ENCODE measurements at regions of chr2 and their contacts with region 1.

Region 1: GRCh38 chr2:218269899-218270720 is at the starts of genes AAMP and PNKD:
- DNase-seq: peak; percentile 100
- ATAC-seq: peak; percentile 88
- H3K4me3 Mint-ChIP-seq: peak within 1 kb of the TSS; percentile 84
- H3K27ac Mint-ChIP-seq: peak within 1 kb of the TSS; percentile 97
- H3K4me1 Mint-ChIP-seq: peaks cover 19% of the 10 kb centered on the region
- H3K27me3 Mint-ChIP-seq: no peaks in the 10 kb centered on the region
- CTCF ChIP-seq: no peak
- total RNA-seq, gene AAMP: 113 to 125 TPM (median 115 TPM) in 3 replicates
- total RNA-seq, gene PNKD: 45.0 to 49.8 TPM (median 45.8 TPM) in 3 replicates

Region 2: DNA sequence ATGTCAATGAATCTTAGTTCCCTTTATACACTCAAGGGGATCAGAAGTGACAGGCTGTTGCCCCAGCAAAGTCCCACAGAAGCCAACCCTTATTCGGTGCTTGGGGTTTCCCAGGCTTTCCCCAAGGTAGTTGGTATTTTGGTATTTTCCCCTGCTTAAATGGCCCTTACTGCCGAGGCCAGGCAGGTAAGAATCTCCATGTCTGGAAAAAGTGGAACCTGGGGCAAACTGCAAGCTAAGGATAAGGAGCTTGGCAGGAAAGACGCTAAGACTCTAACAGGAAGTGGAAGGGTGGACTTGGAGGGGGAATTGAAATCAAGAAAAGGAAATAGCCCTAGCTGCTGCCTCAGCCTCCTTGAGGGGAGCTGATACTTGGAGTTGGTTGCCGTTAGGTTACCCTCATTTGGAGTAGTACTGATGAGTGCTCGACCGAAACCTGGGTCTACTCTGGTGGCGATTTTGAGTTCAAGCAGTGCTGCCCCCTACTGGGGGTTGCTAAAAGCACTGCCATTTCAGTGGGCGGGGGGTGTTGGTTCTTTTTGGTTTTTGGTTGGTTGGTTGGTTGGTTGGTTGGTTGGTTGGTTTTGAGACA is 12.6 kb before region 1 on chr2:
- CTCF ChIA-PET with region 1: interaction called, 43 read pairs
- POLR2A ChIA-PET with region 1: interaction called, 5 read pairs
- DNase-seq: peak; percentile 76
- ATAC-seq: peak; percentile 70
- H3K4me3 Mint-ChIP-seq: no peak overlapping the region
- H3K27ac Mint-ChIP-seq: peak overlapping the region; percentile 47
- H3K4me1 Mint-ChIP-seq: peaks cover 28% of the 10 kb centered on the region
- H3K27me3 Mint-ChIP-seq: peaks cover 3% of the 10 kb centered on the region; the same call in 1 of the 2 replicates
- CTCF ChIP-seq: peak; percentile 73; the same call in 1 of the 2 replicates

Region 3: GRCh38 chr2:218286570-218287459 is 16.7 kb after region 1 on chr2:
- CTCF ChIA-PET with region 1: interaction called, 21 read pairs
- POLR2A ChIA-PET with region 1: interaction called, 10 read pairs
- DNase-seq: peak; percentile 78
- ATAC-seq: peak; percentile 93
- H3K4me3 Mint-ChIP-seq: no peak overlapping the region; the same call in 1 of the 2 replicates
- H3K27ac Mint-ChIP-seq: peak overlapping the region; percentile 43
- H3K4me1 Mint-ChIP-seq: peaks cover 26% of the 10 kb centered on the region
- H3K27me3 Mint-ChIP-seq: 0 out of 2 replicates have a peak, but pooled peaks cover 4% of the 10 kb centered on the region
- CTCF ChIP-seq: no peak

Region 4: GRCh38 chr2:218322895-218323808 is 53.0 kb after region 1 on chr2:
- CTCF ChIA-PET with region 1: interaction called, 10 read pairs
- POLR2A ChIA-PET with region 1: no interaction called
- DNase-seq: peak; percentile 89
- ATAC-seq: peak; percentile 85
- H3K4me3 Mint-ChIP-seq: peak overlapping the region; percentile 98
- H3K27ac Mint-ChIP-seq: peak overlapping the region; percentile 94
- H3K4me1 Mint-ChIP-seq: peaks cover 51% of the 10 kb centered on the region
- H3K27me3 Mint-ChIP-seq: no peaks in the 10 kb centered on the region
- CTCF ChIP-seq: no peak